Gastrocnemius medialis (tissue), 4 donors: ENCODE measurements at regions of chr3 and their contacts with region 1.

Region 1: DNA sequence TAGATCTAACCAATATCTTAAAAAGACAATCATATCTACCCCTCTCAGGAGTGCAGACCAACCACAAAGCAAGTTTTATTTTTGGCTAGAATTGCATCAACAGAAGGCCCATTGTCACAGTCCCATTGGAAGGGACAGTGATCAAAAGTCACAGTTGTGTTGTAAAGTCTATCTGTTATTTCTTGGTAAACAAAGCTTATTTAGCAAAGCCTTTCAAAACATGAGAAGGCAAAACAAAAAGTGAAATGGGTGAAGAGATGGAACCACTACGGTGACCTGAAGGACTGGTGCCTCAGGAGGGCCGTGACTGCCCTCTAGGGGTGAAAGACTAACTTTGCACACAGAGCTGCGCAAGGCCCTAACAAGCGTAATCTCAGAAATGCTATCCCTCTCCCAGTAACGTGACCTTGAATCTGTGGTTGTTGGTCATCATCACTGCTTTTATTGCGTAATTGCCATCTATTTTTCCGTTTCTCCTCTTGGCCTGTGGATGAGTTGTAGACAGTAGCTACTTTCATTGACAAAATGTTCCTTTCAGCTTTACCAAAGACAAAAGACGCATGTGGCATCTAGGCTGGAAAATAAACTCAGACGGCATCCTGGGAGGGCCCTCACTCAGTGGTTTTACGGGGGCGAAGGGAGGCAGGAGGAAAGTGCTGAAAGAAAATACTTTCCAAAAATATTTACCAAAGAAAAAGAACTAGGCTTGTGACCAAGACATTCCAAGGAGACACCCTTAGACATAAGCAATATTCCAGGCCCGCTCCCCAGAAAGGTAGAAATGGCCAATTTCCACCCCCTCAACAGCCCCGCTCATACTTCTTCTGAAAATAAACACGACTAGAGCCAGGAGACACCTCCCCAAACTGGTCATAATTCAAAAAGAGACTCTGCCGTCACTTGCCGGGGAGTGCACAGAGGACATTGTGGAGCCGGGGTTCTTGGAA is 79.4 kb downstream of the FRMD4B start:
- DNase-seq: peak; percentile 66 to 75
- ATAC-seq: peak; percentile 98
- H3K4me3 ChIP-seq: no peak overlapping the region
- H3K27ac ChIP-seq: peak overlapping the region; percentile 49 to 65 (median 55)
- H3K4me1 ChIP-seq: peaks cover 0 to 3% of the 10 kb centered on the region in 2 donors
- H3K27me3 ChIP-seq: no peaks in the 10 kb centered on the region
- CTCF ChIP-seq: peak; percentile 84 to 94 (median 89)
- POLR2A ChIP-seq: no peak

Region 2: GRCh38 chr3:68007621-68008226 is 1298.8 kb before region 1 on chr3:
- in situ Hi-C with region 1: no loop called
- intact Hi-C with region 1: no loop called
- DNase-seq: no peak
- ATAC-seq: no peak
- H3K4me3 ChIP-seq: peak overlapping the region in 2 of 4 donors; percentile 5 to 32
- H3K27ac ChIP-seq: no peak overlapping the region
- H3K4me1 ChIP-seq: no peaks in the 10 kb centered on the region
- H3K27me3 ChIP-seq: peaks cover 0 to 12% (median 12%) of the 10 kb centered on the region in 3 donors
- CTCF ChIP-seq: no peak
- POLR2A ChIP-seq: no peak

Region 3: DNA sequence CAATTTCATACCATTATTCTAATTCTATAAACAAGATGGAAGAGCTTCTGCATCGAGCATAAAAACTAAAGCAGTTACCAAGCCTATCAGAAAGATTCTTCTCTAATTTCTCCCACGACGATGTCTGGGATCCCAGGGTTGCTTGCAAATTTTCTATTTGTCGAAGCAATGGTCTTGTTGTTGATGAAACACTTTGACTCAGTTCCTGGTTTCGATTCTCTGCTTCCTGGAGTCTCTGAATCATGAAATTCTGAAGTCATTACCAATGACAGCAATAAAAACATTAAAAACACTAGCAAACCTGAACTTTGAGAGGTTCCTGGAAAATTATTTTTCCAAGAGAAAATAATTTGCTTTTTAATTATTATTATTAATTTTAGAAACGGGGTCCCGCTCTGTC is 273.0 kb before region 1 on chr3:
- in situ Hi-C with region 1: loop called in 1 of 4 experiments (anchors 25 kb)
- intact Hi-C with region 1: no loop called
- DNase-seq: no peak
- ATAC-seq: no peak
- H3K4me3 ChIP-seq: no peak overlapping the region
- H3K27ac ChIP-seq: no peak overlapping the region
- H3K4me1 ChIP-seq: no peaks in the 10 kb centered on the region
- H3K27me3 ChIP-seq: no peaks in the 10 kb centered on the region
- CTCF ChIP-seq: no peak
- POLR2A ChIP-seq: no peak

Region 4: GRCh38 chr3:69143605-69144004 is 162.9 kb before region 1 on chr3:
- in situ Hi-C with region 1: no loop called
- intact Hi-C with region 1: loop called (anchors 5 kb)
- DNase-seq: no peak
- ATAC-seq: peak; percentile 84 to 89
- H3K4me3 ChIP-seq: no peak overlapping the region
- H3K27ac ChIP-seq: peak overlapping the region; percentile 72 to 81 (median 76)
- H3K4me1 ChIP-seq: peaks cover 36% of the 10 kb centered on the region in 2 donors
- H3K27me3 ChIP-seq: no peaks in the 10 kb centered on the region
- CTCF ChIP-seq: no peak
- POLR2A ChIP-seq: no peak

Region 5: GRCh38 chr3:69410250-69410649 is 103.7 kb after region 1 on chr3:
- in situ Hi-C with region 1: no loop called
- intact Hi-C with region 1: loop called (anchors 5 kb)
- DNase-seq: peak; percentile 26 to 50
- ATAC-seq: peak; percentile 69 to 87
- H3K4me3 ChIP-seq: peak overlapping the region in 1 of 4 donors; percentile 17
- H3K27ac ChIP-seq: peak overlapping the region in 2 of 4 donors; percentile 10 to 38
- H3K4me1 ChIP-seq: no peaks in the 10 kb centered on the region
- H3K27me3 ChIP-seq: no peaks in the 10 kb centered on the region
- CTCF ChIP-seq: peak; percentile 29 to 78 (median 56)
- POLR2A ChIP-seq: no peak

Region 6: DNA sequence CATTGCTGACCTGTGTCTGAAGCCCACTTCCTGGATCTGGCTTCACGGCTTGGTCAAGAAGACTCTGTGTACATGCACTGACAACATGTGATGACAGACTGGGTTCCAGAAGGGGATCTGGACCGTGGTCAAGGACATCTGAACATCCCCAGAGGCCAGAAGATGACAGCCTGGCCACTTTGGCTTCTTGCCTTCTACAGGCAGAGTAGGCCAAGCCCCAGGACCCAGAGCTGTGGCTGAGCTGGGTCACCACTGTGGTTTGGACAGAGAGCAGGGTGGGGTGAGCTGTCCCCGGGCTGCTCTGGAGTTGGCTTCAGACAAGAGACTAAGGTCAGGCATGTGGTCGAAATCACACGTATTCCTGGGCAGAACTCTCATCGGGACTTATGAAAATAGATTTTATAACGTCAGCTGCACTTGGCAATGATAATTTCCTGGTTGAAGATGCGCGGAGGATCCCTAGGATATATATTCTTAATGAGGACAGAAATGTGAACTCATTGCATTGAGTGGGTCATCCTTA is 193.4 kb after region 1 on chr3:
- in situ Hi-C with region 1: no loop called
- intact Hi-C with region 1: no loop called
- DNase-seq: peak; percentile 4 to 48
- ATAC-seq: peak in 1 of 2 donors; percentile 30
- H3K4me3 ChIP-seq: no peak overlapping the region
- H3K27ac ChIP-seq: no peak overlapping the region
- H3K4me1 ChIP-seq: no peaks in the 10 kb centered on the region
- H3K27me3 ChIP-seq: no peaks in the 10 kb centered on the region
- CTCF ChIP-seq: no peak
- POLR2A ChIP-seq: no peak